Prostate gland (tissue), 2 donors: ENCODE measurements at regions of chr13 and their contacts with region 1.

Region 1: DNA sequence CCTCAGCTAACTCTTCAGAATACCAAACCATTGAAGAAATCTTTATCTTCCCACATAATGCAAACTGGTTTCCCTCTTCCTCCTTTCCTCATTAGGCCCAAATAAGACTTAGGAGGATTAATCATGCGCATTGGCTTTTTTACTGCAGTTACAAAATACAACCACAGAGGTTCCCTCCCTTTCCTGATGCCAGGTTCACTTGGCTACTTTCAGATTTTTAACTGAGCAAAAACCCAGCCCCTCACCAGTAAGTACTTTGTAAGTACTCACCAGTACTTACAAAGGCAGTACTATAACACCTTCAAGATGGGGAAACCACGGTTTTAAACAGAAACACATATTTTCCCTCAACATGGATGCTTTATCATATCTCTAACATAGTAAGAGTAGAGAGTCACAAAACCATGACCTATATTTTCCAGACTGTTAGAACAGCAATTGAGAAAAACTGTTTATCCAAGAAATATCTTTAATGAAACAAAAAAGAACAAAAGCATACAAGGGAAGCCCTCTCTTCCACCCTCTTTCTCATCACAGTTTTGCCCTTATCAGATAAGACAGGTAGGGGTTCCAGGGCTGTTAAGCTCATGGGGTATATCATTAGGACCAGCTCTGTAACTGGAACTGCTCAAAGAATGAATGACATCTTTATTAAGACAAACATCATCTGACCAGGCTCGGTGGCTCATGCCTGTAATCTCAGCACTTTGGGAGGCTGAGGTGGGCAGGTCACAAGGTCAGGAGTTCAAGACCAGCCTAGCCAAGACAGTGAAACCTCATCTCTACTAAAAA is 12.7 kb downstream of the FOXO1 start:
- DNase-seq: no peak
- H3K4me3 ChIP-seq: no peak overlapping the region
- H3K27ac ChIP-seq: no peak overlapping the region
- H3K4me1 ChIP-seq: no peaks in the 10 kb centered on the region
- H3K27me3 ChIP-seq: no peaks in the 10 kb centered on the region
- CTCF ChIP-seq: no peak
- POLR2A ChIP-seq: no peak

Region 2: DNA sequence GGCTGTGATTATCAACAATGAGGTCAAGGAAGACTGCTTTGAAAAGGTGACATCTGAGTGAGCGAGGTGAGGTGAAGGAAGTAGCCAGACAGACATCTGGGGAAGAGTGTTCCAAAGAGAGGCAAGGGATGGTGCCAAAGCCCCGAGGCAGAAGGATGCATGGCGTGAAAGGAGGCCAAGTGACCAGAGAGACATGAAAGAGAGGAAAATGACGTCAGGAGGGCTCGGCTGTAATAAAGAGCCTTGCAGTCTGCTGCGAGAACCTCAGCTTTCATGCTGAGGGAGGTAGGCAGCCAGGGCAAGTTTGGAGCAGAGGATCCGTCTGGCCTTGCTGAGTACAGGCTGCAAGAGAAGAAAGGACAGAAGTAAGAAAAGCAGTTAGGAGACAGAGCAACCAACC is 38.1 kb before region 1 on chr13:
- intact Hi-C with region 1: loop called (anchors 5 kb)
- DNase-seq: no peak
- H3K4me3 ChIP-seq: no peak overlapping the region
- H3K27ac ChIP-seq: no peak overlapping the region
- H3K4me1 ChIP-seq: peaks cover 7% of the 10 kb centered on the region
- H3K27me3 ChIP-seq: no peaks in the 10 kb centered on the region
- CTCF ChIP-seq: no peak
- POLR2A ChIP-seq: no peak

Region 3: DNA sequence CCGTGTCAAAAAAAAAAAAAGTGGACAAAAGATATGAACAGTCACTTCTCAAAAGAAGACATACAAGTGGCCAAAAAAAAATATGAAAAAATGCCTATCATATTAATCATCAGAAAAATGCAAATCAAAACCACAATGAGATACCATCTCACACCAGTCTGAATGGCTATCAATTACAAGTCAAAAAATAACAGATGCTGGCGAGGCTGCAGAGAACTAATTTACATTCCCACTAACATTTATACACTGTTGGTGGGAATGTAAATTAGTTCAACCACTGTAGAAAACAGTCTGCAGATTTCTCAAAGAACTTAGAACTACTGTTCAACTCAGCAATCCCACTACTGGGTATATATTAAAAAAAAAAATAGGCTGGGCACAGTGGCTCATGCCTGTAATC is 39.2 kb after region 1 on chr13:
- intact Hi-C with region 1: no loop called
- DNase-seq: no peak
- H3K4me3 ChIP-seq: no peak overlapping the region
- H3K27ac ChIP-seq: no peak overlapping the region
- H3K4me1 ChIP-seq: no peaks in the 10 kb centered on the region
- H3K27me3 ChIP-seq: no peaks in the 10 kb centered on the region
- CTCF ChIP-seq: no peak
- POLR2A ChIP-seq: no peak